ENCODE measurements at regions of chr9 and their contacts with region 1.

Region 1: DNA sequence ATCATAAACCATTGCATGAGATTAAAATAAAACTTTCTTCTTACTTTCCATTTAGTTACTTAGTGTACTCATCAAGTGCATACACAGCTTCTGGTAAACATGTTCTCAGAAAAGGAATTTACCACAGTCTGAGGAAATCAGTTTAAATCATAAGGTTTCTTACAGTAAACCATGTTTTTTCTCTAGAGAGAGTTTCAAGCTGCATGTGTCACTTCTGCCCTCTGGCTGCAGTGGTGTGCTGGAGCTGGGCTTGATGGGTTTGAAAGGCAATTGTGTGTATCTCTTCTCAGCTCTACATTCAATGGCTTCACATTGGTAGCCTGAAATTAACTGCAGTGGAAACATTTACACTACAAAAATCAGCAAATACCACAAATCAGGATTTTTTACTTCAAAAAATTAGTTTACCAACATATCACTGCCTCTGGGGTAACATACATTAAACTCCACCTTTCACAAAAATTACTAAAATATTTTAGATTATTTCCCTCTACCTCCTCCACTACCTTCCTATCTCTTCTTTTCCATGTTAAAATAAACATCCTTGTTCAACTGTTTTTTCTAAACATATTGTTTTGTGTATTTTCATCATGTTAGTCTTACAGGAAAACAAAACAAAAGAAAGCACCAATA is 414.3 kb downstream of the ANXA1 start:
- DNase-seq: no peak
- ATAC-seq: no peak

Region 2: GRCh38 chr9:73269430-73270101 is 296.4 kb before region 1 on chr9:
- intact Hi-C with region 1: loop called (anchors 5 kb)
- DNase-seq: no peak
- ATAC-seq: no peak

Region 3: DNA sequence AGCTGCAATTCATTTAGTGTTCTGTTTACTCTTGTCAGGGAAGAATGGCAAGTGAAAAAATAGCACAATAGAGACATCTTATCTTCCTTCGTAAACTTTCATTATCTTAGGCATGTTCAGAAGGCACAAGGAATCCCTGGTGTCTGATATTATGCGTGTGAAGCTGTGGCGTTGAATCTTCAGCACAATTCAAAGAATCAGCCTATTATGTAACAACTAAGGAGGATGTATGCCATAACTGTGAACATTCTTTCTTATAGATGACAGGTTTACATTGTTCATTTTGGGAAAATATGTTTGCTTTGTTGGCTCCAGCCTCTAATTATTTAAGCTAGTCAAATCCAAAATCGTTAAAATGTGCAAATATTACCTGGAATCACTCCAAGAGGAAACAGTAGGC is 31.8 kb after region 1 on chr9:
- intact Hi-C with region 1: no loop called
- DNase-seq: no peak
- ATAC-seq: no peak